Panc1 (cell line): ENCODE measurements at regions of chr19 and their contacts with region 1.

Region 1: DNA sequence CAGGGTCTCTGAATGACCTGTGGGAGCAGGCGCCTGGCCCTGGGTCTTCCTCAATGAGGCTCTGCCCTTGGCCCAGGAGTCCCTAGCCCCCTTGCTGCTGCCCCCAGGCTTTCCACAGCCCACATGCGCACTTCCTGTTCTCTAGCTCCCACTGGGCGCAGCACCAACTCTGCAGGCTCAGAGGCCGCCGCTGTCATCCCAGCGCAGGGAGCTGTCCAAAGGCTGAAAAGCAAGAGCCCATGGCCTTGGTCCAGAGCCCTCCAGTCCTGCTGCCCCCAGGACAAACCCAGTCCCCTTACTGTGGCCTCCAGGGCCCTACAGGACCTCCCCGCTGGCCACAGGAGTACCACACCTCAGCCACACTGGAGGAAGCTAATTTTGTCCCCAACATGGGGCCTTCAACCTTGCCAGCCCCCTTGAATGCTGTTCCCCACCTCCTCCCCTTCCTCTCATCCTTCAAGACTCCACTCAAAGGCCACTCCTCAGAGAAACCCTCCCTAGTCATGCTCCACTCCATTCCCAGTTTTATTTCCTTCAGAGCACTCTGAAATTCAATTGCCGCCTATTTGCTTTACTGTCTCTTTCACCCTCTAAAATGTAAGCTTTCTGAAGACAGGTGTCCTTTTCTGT is 8.0 kb upstream of the POU2F2 start:
- DNase-seq: no peak
- ATAC-seq: no peak
- H3K4me3 ChIP-seq: no peak overlapping the region
- H3K27ac ChIP-seq: no peak overlapping the region
- H3K4me1 ChIP-seq: no peaks in the 10 kb centered on the region
- H3K27me3 ChIP-seq: no peaks in the 10 kb centered on the region
- CTCF ChIP-seq: no peak

Region 2: DNA sequence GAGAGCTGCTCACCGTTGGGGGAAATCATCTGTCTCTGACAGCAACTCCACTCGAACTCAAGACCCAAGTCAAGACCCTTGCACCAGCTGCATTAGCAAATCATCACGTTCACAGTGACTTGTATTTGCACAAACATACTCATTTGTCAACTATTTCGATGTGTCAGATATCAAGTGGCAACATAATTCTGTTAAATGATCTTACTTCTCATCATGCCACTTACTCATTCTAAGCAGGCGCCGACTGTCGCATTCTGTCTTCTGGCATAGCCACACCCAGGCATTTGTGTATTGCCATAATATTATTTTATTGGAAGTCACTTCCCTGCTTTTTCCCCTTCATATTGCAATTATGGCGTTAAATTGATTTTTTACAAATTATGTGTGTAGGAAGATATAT is 123.2 kb before region 1 on chr19:
- CTCF ChIA-PET with region 1: interaction called, 15 read pairs
- POLR2A ChIA-PET with region 1: no interaction called
- in situ Hi-C with region 1: no loop called
- intact Hi-C with region 1: no loop called
- DNase-seq: no peak
- ATAC-seq: no peak
- H3K4me3 ChIP-seq: no peak overlapping the region
- H3K27ac ChIP-seq: no peak overlapping the region
- H3K4me1 ChIP-seq: no peaks in the 10 kb centered on the region
- H3K27me3 ChIP-seq: no peaks in the 10 kb centered on the region
- CTCF ChIP-seq: no peak

Region 3: DNA sequence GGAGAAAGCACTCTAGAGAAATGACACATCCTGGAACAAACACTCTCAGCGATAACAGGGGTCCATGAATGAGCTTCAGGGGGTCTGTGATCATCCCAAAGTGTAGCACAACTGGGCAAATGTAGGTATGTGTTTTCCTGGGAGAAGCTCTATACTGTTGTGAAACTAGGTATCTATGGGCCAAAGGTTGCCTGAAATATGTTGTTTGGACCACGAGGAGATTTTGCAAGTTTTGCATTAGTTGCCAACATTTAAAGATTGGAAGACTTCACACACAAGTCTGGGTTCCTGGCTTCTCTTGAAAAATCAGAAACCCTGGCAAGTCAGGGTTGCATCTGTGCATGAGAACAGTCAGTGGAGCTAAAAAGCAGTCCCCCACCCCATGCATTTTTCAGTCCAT is 18.7 kb after region 1 on chr19:
- CTCF ChIA-PET with region 1: no interaction called
- POLR2A ChIA-PET with region 1: no interaction called
- in situ Hi-C with region 1: no loop called
- intact Hi-C with region 1: no loop called
- DNase-seq: no peak
- ATAC-seq: no peak
- H3K4me3 ChIP-seq: no peak overlapping the region
- H3K27ac ChIP-seq: no peak overlapping the region
- H3K4me1 ChIP-seq: no peaks in the 10 kb centered on the region
- H3K27me3 ChIP-seq: no peaks in the 10 kb centered on the region
- CTCF ChIP-seq: no peak

Region 4: DNA sequence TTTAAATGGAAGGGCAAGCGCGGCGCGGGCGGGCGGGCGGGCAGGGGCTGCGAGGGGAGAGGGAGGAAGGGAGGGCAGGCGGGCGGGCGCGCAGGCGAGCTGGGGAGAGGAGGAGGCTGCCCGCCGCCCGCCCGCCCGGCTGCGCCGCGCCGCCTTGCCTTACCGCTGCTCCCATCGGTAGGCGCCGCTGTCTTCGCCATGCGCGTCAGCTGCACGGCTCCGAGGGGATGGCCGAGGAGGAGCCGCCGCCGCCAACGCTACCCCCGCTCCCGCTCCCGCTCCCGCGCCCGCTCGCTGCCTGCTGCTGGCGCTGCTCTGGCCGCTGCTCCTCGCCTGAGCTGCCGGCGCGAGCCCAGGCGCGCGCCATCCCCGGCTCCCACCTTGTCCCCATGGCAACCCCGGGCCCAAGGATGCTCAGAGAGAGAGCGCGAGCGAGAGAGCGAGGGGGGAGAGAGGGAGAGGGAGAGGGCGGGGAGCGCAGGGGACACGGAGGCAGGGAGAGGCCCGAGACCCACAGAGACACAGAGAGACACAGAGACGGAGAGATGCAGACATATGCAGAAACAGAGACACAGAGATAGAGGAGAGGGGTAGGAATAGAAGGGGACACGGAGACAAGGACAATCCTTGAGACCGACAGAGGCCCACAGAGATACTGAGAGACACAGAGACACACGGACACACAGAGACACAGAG is 36.9 kb after region 1 on chr19:
- CTCF ChIA-PET with region 1: interaction called, 13 read pairs
- POLR2A ChIA-PET with region 1: no interaction called
- in situ Hi-C with region 1: no loop called
- intact Hi-C with region 1: no loop called
- DNase-seq: no peak
- ATAC-seq: peak; percentile 93
- H3K4me3 ChIP-seq: peak overlapping the region; percentile 43 to 45; a peak in 3 of 4 replicates
- H3K27ac ChIP-seq: no peak overlapping the region
- H3K4me1 ChIP-seq: no peaks in the 10 kb centered on the region
- H3K27me3 ChIP-seq: peaks cover 15% of the 10 kb centered on the region
- CTCF ChIP-seq: no peak; the same call in 1 of the 2 replicates